ENCODE measurements at regions of chr11 and their contacts with region 1.

Region 1: DNA sequence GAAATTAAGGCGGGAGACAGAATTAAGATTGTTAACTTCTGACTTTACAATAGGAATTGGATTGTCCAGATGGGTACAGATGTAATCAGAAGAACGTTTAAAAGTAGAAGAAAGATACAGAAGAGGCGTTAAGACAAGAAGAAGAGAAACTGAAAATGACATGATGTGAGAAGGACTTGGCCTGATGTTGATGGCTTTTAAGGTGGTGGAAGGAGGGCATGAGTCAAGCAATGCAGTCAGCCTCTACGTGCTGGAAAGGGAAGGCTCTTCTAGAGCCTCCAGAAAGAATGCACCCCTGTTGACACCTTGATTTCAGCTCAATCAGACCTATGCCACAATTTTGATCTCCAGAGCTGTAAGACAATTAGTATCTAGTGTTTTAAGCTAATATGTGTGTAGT is 466.9 kb upstream of the LRRC4C start:
- DNase-seq: no peak
- ATAC-seq: no peak
- H3K4me3 ChIP-seq: no peak overlapping the region
- H3K27ac ChIP-seq: no peak overlapping the region
- H3K4me1 ChIP-seq: no peaks in the 10 kb centered on the region
- H3K27me3 ChIP-seq: no peaks in the 10 kb centered on the region
- CTCF ChIP-seq: no peak
- POLR2A ChIP-seq: no peak
- RAD21 ChIP-seq: no peak

Region 2: DNA sequence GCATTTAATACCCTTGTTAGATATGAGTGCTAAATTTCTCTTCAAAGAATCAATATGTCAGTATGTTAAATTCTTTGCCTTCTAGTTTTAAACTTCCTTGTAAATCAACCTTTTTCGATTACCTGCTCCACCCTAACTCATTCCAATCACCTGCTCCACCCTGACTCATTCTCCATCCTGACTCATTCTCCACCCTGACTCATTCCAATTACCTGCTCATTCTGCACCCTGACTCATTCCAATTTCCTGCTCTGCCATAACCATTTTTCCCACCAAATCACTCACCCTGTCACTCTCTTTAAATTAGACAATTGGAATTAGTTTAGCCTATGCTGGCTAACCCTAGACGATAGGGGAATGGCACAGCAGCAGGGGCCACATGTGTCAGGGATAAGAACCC is 52.6 kb after region 1 on chr11:
- CTCF ChIA-PET with region 1: no interaction called
- POLR2A ChIA-PET with region 1: interaction called, 10 read pairs
- dilution Hi-C with region 1: no loop called
- in situ Hi-C with region 1: no loop called
- intact Hi-C with region 1: no loop called
- DNase-seq: no peak
- ATAC-seq: no peak
- H3K4me3 ChIP-seq: no peak overlapping the region
- H3K27ac ChIP-seq: no peak overlapping the region
- H3K4me1 ChIP-seq: no peaks in the 10 kb centered on the region
- H3K27me3 ChIP-seq: no peaks in the 10 kb centered on the region
- CTCF ChIP-seq: no peak
- POLR2A ChIP-seq: no peak
- RAD21 ChIP-seq: no peak

Region 3: GRCh38 chr11:42273977-42274376 is 347.6 kb after region 1 on chr11:
- CTCF ChIA-PET with region 1: no interaction called
- POLR2A ChIA-PET with region 1: no interaction called
- dilution Hi-C with region 1: no loop called
- in situ Hi-C with region 1: no loop called
- intact Hi-C with region 1: no loop called
- DNase-seq: no peak
- ATAC-seq: no peak
- H3K4me3 ChIP-seq: no peak overlapping the region
- H3K27ac ChIP-seq: no peak overlapping the region
- H3K4me1 ChIP-seq: no peaks in the 10 kb centered on the region
- H3K27me3 ChIP-seq: no peaks in the 10 kb centered on the region
- CTCF ChIP-seq: no peak
- POLR2A ChIP-seq: no peak
- RAD21 ChIP-seq: no peak

Region 4: DNA sequence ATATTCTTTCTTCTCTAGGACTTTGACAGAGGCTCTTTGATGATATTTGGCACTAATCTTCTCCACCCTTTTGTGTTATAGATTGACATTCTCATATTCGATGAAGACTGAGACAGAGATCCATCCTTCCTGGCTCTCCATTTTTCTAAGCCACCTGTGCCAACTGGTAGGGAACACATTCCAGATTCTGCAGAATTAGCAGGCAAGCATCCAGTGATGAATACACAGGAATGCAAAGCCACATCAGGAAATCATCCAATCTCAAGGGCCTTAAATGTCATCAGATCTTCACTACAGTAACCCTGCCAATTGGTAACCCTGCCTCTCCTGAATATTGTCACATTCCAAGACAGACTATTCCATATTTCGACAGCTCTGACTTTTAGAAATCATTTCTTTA is 667.1 kb after region 1 on chr11:
- CTCF ChIA-PET with region 1: no interaction called
- POLR2A ChIA-PET with region 1: no interaction called
- dilution Hi-C with region 1: no loop called
- in situ Hi-C with region 1: no loop called
- intact Hi-C with region 1: no loop called
- DNase-seq: no peak
- ATAC-seq: no peak
- H3K4me3 ChIP-seq: no peak overlapping the region
- H3K27ac ChIP-seq: no peak overlapping the region
- H3K4me1 ChIP-seq: no peaks in the 10 kb centered on the region
- H3K27me3 ChIP-seq: no peaks in the 10 kb centered on the region
- CTCF ChIP-seq: no peak
- POLR2A ChIP-seq: no peak
- RAD21 ChIP-seq: no peak